Cardiac septum (tissue), 1 donor: ENCODE measurements at regions of chr15 and their contacts with region 1.

Region 1: DNA sequence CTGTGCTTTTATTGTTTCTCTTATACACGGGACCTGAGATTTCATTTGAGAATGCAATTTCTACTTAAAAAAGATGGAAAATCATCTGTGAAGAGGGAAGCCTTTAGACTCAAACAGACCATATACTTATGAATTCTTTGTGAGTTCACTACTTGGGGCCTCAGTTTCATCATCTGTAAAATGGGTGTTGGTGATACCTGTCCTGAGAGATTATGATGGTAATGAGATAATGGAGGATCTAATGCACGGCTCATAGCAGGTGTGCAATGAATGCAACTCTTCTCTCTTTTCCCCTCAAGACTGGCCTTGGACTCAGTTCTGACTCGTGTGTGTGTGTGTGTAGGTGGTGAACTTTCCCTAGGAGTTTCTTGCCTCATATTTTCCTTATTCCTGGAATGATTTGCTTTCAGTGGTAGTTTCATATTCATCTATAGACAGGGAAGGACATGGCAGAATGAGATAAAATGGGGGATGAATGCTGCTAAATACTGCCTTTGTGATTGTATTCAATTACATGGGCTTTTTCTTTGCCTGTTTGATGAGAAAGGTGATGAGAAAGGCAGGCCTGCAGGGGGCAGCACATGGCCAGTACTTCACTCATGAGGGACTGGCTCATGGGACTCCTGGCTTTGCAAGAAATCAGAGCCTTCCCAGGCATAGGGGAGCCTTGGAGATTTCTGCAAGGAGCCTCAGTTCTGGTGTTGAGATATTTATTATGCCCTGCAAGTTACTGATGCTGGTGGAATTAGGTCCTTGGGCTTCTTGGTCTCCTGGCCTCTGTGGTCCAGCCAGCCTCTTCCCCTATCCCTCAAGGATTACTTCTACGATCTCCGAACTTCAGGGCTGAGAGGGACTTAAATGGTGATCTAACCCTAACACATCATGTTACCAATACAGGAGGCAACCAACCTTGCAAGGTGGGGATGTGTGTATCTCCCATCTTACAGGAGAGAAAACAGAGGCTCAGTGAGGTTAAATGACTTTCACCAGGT is 70.7 kb downstream of the RPLP1 start:
- DNase-seq: no peak

Region 2: GRCh38 chr15:69489073-69489571 is 34.2 kb before region 1 on chr15:
- intact Hi-C with region 1: no loop called
- DNase-seq: no peak

Region 3: GRCh38 chr15:70488002-70488605 is 964.8 kb after region 1 on chr15:
- intact Hi-C with region 1: loop called (anchors 5 kb)
- DNase-seq: peak; percentile 90